GM12878 (cell line): ENCODE measurements at regions of chrX and their contacts with region 1.

Region 1: DNA sequence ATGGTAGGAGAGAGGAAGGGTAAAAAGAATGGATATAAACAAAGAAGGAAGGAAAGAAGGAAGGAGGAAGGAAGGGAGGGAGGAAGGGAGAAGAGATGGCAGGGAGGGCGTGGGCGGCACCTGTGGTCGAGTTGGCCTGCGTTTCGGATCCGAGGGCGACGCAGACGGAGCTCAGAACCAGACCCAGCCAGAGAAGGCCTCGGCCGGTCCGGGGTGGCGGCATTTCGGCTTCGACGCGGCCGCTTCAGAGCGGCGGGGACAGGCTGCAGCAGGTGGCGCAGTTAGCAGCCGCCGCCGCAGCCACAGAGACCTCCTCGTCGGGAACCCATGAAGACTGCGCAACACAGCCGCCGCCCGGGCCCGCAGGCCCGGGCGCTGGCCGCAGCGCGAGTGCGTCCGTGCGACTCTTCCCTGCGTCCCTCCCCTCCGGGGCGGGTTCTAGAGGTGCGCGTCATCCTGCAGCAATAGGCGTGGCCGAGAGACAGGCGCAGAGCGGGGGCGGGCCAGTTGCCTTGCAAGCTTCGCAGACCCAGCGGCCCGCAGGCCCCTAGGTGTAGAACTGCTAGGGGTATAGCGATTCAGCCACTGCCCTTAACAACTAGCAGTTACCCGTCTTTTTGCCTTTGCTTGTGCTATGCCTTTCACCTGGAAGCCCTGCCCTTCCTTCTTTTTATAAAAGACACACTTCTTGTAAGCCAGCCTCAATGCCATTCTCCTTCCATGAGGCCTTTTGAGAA is at the start of gene IDS:
- DNase-seq: peak; percentile 37
- ATAC-seq: peak; percentile 80
- H3K4me3 ChIP-seq: peak within 1 kb of the TSS; percentile 65
- H3K27ac ChIP-seq: peak within 1 kb of the TSS; percentile 67
- H3K4me1 ChIP-seq: peaks cover 21% of the 10 kb centered on the region
- H3K27me3 ChIP-seq: no peaks in the 10 kb centered on the region; a peak in 2 of 4 replicates
- CTCF ChIP-seq: no peak
- EP300 ChIP-seq: no peak
- POLR2A ChIP-seq: peak; percentile 92
- RAD21 ChIP-seq: no peak
- polyA plus RNA-seq, gene IDS: 6.1 to 9.6 TPM

Region 2: DNA sequence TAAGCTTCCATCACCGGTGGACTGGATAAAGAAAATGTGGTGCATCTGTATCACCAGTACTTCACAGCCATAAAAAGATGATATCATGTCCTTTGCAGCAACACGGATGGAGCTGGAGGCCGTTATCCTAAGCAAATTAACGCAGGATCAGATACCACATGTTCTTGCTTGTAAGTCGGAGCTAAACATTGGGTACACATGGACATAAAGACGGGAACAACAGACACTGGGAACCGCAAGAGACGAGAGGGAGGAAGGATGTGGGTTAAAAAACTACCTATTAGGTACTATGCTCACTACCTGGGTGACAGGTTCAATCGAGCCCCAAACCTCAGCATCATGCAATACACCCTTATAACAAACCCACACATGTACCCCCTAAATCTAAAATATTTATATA is 16.4 kb after region 1 on chrX:
- CTCF ChIA-PET with region 1: interaction called, 88 read pairs
- POLR2A ChIA-PET with region 1: interaction called, 10 read pairs
- RAD21 ChIA-PET with region 1: no interaction called
- SMC1A ChIA-PET with region 1: interaction called, 3 read pairs
- in situ Hi-C with region 1: no loop called
- intact Hi-C with region 1: no loop called
- DNase-seq: no peak
- ATAC-seq: no peak
- H3K4me3 ChIP-seq: no peak overlapping the region
- H3K27ac ChIP-seq: no peak overlapping the region
- H3K4me1 ChIP-seq: peaks cover 11% of the 10 kb centered on the region
- H3K27me3 ChIP-seq: no peaks in the 10 kb centered on the region
- CTCF ChIP-seq: no peak
- EP300 ChIP-seq: no peak
- POLR2A ChIP-seq: no peak
- RAD21 ChIP-seq: no peak

Region 3: GRCh38 chrX:149938427-149939270 is 433.6 kb after region 1 on chrX and contains the start of gene EOLA2:
- CTCF ChIA-PET with region 1: interaction called, 5 read pairs
- POLR2A ChIA-PET with region 1: interaction called, 4 read pairs
- RAD21 ChIA-PET with region 1: interaction called, 5 read pairs
- SMC1A ChIA-PET with region 1: no interaction called
- in situ Hi-C with region 1: no loop called
- intact Hi-C with region 1: loop called (anchors 10 kb)
- DNase-seq: peak; percentile 97
- ATAC-seq: peak; percentile 71
- H3K4me3 ChIP-seq: peak within 1 kb of the TSS; percentile 83
- H3K27ac ChIP-seq: peak within 1 kb of the TSS; percentile 69
- H3K4me1 ChIP-seq: no peaks in the 10 kb centered on the region
- H3K27me3 ChIP-seq: no peaks in the 10 kb centered on the region
- CTCF ChIP-seq: peak; percentile 53 to 61 (median 57); a peak in 5 of 6 replicates
- EP300 ChIP-seq: no peak
- POLR2A ChIP-seq: peak; percentile 47
- RAD21 ChIP-seq: no peak
- polyA plus RNA-seq, gene EOLA2: 26.9 to 37.0 TPM